ENCODE measurements at regions of chr1 and their contacts with region 1.

Region 1: DNA sequence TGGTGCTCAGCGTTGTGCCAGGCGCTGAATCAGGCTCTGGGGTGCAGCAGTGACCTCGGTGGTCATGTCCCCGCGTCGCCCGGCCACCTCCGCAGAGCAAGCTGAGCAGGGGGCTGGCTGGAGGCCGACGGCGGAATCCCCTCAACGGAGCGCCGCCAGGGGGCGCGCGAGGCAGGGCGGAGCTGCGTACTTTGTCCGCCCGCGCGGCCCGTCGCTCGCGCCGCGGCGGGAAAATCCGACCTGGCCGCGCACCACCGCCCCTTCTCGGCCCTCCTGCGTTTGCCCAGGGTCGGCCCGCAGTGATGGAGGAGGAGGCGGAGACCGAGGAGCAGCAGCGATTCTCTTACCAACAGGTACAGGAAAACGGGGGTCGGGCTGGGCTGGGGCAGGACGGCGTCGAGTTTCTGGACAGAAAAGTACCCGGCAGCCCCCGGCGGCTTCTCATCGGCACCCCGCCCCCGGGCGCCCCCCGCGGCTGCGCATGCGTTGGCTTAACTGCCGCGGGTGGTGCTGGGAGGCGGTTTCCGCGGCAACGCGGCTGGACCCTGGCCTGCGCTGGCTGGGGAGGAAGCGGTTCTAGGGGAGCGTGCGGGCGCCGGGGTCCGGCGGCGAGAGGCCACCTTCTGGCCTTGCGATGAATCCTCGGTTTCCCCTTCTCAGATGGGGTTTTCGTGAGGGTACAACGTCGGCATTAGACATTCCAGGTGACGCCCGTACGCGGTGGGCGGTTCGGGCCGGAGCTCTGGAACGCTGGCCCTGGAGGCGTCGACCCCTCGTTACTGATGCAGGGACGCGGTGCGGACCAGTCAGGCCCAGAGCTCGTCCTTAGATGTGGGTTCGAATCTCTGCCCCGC is at the start of gene CENPS:
- DNase-seq: peak; percentile 67 to 98
- H3K4me3 ChIP-seq: peak within 1 kb of the TSS; percentile 66 to 80 (median 72)
- H3K27ac ChIP-seq: peak within 1 kb of the TSS; percentile 96
- H3K4me1 ChIP-seq: peaks cover 0 to 5% (median under 1%) of the 10 kb centered on the region in 4 experiments; a peak in 4 of 7 replicates
- H3K27me3 ChIP-seq: no peaks in the 10 kb centered on the region
- CTCF ChIP-seq: peak; percentile 84 to 92 (median 90)
- EP300 ChIP-seq: no peak
- POLR2A ChIP-seq: peak in 1 of 2 experiments; percentile 90; a peak in 2 of 3 replicates
- RAD21 ChIP-seq: peak; percentile 38 to 60
- total RNA-seq, gene CENPS: 15.7 and 20.3 TPM in 2 replicates

Region 2: DNA sequence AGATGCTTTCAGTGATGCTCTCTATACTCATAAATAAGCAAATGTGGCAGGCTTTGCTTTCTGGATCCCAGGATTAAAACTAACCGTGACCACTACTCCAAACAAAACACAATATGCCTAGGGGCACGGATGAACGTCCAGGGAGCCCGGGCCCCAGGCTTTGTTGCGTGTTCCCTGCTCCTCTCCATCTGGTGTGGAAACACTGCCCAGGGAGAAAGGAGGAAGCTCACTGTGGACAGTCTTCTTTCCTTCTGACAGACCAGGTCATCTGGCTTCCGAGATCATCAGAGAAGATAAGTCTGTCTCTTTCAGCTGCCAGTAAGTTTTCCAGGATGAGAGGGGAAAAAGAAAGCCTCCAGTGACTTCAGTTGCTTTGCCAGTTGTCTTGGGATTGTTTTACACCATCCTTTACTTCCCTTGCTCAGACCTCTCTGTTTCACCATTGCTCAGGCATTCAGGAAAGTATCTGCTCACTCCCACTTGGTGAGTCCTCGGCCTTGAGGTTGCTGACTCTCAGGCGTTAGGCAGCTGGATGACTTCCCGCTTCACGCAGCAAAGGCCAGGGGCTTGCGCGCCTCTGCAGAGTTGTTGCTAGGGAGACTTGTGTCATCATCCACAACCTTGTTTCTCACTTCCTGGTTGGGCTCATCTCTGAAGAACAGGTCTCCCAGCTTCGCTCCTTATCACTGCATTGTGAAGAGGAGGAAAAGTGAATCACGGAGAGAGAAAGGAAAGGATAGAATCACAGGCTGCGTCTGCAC is 52.2 kb before region 1 on chr1:
- CTCF ChIA-PET with region 1: interaction called, 10 read pairs
- POLR2A ChIA-PET with region 1: no interaction called
- DNase-seq: no peak
- H3K4me3 ChIP-seq: no peak overlapping the region
- H3K27ac ChIP-seq: no peak overlapping the region
- H3K4me1 ChIP-seq: no peaks in the 10 kb centered on the region
- H3K27me3 ChIP-seq: no peaks in the 10 kb centered on the region
- CTCF ChIP-seq: no peak
- EP300 ChIP-seq: no peak
- POLR2A ChIP-seq: no peak
- RAD21 ChIP-seq: no peak

Region 3: GRCh38 chr1:10398734-10399623 is 31.5 kb before region 1 on chr1 and contains the start of gene PGD:
- CTCF ChIA-PET with region 1: interaction called, 22 read pairs
- POLR2A ChIA-PET with region 1: interaction called, 23 read pairs
- DNase-seq: peak; percentile 87 to 99
- H3K4me3 ChIP-seq: peak within 1 kb of the TSS; percentile 84 to 99 (median 95)
- H3K27ac ChIP-seq: peak within 1 kb of the TSS; percentile 90
- H3K4me1 ChIP-seq: peaks cover 0 to 7% (median 5%) of the 10 kb centered on the region in 4 experiments; a peak in 5 of 7 replicates
- H3K27me3 ChIP-seq: no peaks in the 10 kb centered on the region
- CTCF ChIP-seq: no peak
- EP300 ChIP-seq: no peak
- POLR2A ChIP-seq: peak; percentile 90 to 94
- RAD21 ChIP-seq: no peak
- total RNA-seq, gene PGD: 331 and 340 TPM in 2 replicates

Region 4: GRCh38 chr1:10451287-10451686 is 20.8 kb after region 1 on chr1:
- CTCF ChIA-PET with region 1: interaction called, 34 read pairs
- POLR2A ChIA-PET with region 1: interaction called, 15 read pairs
- DNase-seq: no peak
- H3K4me3 ChIP-seq: peak overlapping the region in 1 of 4 experiments; percentile 2; a peak in 1 of 8 replicates
- H3K27ac ChIP-seq: no peak overlapping the region
- H3K4me1 ChIP-seq: peaks cover 0 to 9% (median 5%) of the 10 kb centered on the region in 4 experiments; a peak in 5 of 7 replicates
- H3K27me3 ChIP-seq: no peaks in the 10 kb centered on the region
- CTCF ChIP-seq: no peak
- EP300 ChIP-seq: no peak
- POLR2A ChIP-seq: no peak
- RAD21 ChIP-seq: no peak

Region 5: GRCh38 chr1:10472220-10473144 is 42.0 kb after region 1 on chr1 and contains the start of gene DFFA:
- CTCF ChIA-PET with region 1: interaction called, 3 read pairs
- POLR2A ChIA-PET with region 1: interaction called, 15 read pairs
- DNase-seq: peak; percentile 94 to 95
- H3K4me3 ChIP-seq: peak within 1 kb of the TSS; percentile 77 to 91 (median 87)
- H3K27ac ChIP-seq: no peak within 1 kb of the TSS
- H3K4me1 ChIP-seq: no peaks in the 10 kb centered on the region; a peak in 3 of 7 replicates
- H3K27me3 ChIP-seq: no peaks in the 10 kb centered on the region
- CTCF ChIP-seq: no peak
- EP300 ChIP-seq: peak in 1 of 2 experiments; percentile 32; a peak in 1 of 3 replicates
- POLR2A ChIP-seq: peak; percentile 69 to 91
- RAD21 ChIP-seq: peak in 1 of 2 experiments; percentile 8; a peak in 1 of 4 replicates
- total RNA-seq, gene DFFA: 78.3 and 79.9 TPM in 2 replicates